ENCODE measurements at regions of chr6 and their contacts with region 1.

Region 1: GRCh38 chr6:41072676-41073623 is at the start of gene NFYA:
- DNase-seq: peak; percentile 100
- H3K4me3 Mint-ChIP-seq: peak within 1 kb of the TSS; percentile 95
- H3K27ac Mint-ChIP-seq: peak within 1 kb of the TSS; percentile 99
- H3K4me1 Mint-ChIP-seq: peaks cover 66% of the 10 kb centered on the region
- H3K27me3 Mint-ChIP-seq: peaks cover 5% of the 10 kb centered on the region
- total RNA-seq, gene NFYA: 29.6 and 30.1 TPM in 2 replicates

Region 2: DNA sequence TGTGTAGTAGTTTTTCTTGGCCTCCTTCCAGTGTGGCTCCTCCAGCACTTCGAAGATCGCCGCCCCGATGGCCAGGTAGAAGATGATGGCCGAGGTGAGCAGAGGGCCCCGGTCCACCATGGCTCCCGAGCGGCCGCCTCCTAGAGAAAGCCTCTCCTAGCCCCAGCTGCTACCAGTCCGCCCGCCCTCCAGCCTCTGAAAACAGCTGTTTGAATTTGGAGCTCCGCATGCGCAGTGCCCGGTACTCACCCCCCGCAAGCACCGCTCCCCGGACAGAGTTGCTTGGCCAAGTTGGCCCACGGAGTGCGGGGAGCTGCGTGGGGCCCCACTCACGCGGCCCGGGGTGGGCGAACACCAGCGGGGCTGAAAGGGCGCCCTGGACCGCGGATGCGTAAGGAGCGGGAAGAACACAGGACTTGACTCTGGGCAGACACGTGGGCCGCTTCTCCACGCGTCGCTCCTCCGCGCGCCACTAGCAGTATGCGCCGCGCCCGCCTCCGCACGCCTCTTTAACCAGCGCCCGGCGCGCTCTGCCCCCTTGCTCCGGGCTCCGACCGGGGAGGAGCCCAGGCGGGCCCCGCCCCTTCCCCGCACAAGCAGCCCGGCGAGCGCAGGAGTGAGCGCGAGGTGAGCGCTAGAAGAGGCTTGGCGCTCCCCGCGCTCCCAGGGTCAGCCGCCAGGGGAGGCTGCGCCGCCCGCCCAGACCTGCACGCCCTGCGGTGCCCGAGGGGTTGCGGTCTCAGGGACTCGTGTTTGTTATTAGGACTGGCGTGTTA is 1843.8 kb before region 1 on chr6 and contains the start of gene KCNK5:
- intact Hi-C with region 1: loop called (anchors 5 kb)
- DNase-seq: peak; percentile 86
- H3K4me3 Mint-ChIP-seq: peak within 1 kb of the TSS; percentile 88
- H3K27ac Mint-ChIP-seq: peak within 1 kb of the TSS; percentile 94
- H3K4me1 Mint-ChIP-seq: peaks cover 54% of the 10 kb centered on the region
- H3K27me3 Mint-ChIP-seq: no peaks in the 10 kb centered on the region
- total RNA-seq, gene KCNK5: 36.7 and 38.7 TPM in 2 replicates

Region 3: GRCh38 chr6:40845553-40845952 is 227.4 kb before region 1 on chr6:
- intact Hi-C with region 1: no loop called
- DNase-seq: peak; percentile 10
- H3K4me3 Mint-ChIP-seq: no peak overlapping the region
- H3K27ac Mint-ChIP-seq: no peak overlapping the region
- H3K4me1 Mint-ChIP-seq: no peaks in the 10 kb centered on the region
- H3K27me3 Mint-ChIP-seq: peaks cover 30% of the 10 kb centered on the region

Region 4: DNA sequence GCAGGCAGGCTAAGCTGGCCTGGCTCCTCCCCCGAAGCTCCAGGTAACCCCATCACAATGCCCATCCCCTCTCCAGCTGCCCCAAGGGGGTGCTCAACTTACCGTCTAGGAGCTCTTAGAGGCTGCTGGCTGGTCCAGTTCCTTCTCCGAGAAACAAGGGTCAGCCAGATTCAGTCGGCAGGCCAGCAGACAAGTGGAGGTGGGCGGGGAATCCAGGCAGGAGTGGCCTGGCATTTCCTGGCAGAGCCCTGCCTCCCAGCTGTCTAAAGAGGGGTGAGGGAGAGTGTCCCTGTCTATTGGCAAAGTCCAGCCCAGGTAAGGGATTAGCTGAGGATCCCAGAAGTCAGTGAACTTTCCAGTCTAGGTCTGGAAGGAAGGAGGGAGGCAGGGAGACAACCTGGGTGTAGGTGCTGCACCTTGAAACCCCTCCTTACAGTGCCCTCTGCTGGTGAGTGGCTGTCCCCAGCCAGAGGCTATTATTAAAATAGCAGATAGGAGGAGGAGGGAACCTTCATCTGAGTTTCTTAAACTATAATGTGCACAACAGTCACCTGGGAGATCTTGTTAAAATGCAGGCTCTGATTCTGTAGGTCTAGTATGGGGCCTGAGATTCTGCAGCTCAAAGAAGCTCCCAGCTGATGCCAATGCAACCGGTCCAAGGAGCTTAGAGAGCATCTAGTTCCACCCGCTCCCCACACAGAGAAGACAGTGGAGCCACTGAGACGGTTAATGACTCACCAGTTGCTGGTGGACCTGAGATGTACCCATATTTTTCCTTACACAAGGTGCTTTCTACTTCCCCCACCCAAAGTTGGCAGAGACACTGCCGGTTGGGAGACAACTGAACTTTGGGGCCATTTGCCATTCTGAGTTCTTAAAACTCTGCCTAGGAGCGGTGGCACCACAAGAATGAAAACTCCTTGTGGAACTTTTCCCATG is 33.6 kb before region 1 on chr6 and contains the start of gene UNC5CL:
- intact Hi-C with region 1: loop called (anchors 1 kb)
- DNase-seq: peak; percentile 45
- H3K4me3 Mint-ChIP-seq: no peak within 1 kb of the TSS
- H3K27ac Mint-ChIP-seq: peak within 1 kb of the TSS; percentile 3
- H3K4me1 Mint-ChIP-seq: peaks cover 19% of the 10 kb centered on the region
- H3K27me3 Mint-ChIP-seq: peaks cover 7% of the 10 kb centered on the region
- total RNA-seq, gene UNC5CL: 0.93 and 0.99 TPM in 2 replicates

Region 5: DNA sequence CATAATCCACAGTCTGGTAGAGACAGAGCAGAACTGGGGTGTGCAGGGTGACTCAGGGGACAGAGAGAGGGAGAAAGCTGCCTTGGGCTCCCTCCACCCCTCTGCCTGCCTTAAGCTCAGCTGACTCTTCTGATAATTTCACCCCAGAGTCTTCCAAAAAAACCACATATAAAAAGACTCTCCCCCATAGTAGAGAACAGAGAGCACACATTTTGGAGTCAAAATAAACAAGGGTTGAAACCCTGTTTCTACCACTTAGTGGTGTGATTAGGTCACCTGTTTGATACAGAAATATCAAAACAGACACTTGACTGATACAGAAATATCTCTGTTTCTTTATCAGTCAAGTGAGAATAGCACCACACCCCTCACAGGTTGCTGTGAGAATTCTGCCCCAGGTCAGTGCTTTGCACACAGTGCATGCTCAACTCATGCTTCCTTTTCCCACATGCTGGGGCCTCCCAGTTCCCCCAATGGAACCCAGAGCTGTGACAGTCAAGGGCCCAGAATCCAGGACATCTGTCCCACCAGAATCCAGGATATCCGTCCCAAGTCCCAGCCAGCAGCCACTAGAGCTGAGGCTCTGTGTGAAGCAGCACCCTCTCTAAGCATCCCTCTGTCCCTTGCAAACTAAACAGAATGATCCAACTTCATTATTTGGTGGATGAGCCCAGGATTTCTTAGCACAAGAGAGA is 126.7 kb after region 1 on chr6:
- intact Hi-C with region 1: loop called (anchors 5 kb)
- DNase-seq: no peak
- H3K4me3 Mint-ChIP-seq: peak overlapping the region; percentile 77
- H3K27ac Mint-ChIP-seq: peak overlapping the region; percentile 95
- H3K4me1 Mint-ChIP-seq: peaks cover 68% of the 10 kb centered on the region
- H3K27me3 Mint-ChIP-seq: no peaks in the 10 kb centered on the region

Region 6: GRCh38 chr6:41531591-41532582 is 458.9 kb after region 1 on chr6:
- intact Hi-C with region 1: loop called (anchors 1 kb)
- DNase-seq: peak; percentile 63
- H3K4me3 Mint-ChIP-seq: peak overlapping the region; percentile 76
- H3K27ac Mint-ChIP-seq: peak overlapping the region; percentile 92
- H3K4me1 Mint-ChIP-seq: peaks cover 50% of the 10 kb centered on the region
- H3K27me3 Mint-ChIP-seq: peaks cover 38% of the 10 kb centered on the region

Region 7: DNA sequence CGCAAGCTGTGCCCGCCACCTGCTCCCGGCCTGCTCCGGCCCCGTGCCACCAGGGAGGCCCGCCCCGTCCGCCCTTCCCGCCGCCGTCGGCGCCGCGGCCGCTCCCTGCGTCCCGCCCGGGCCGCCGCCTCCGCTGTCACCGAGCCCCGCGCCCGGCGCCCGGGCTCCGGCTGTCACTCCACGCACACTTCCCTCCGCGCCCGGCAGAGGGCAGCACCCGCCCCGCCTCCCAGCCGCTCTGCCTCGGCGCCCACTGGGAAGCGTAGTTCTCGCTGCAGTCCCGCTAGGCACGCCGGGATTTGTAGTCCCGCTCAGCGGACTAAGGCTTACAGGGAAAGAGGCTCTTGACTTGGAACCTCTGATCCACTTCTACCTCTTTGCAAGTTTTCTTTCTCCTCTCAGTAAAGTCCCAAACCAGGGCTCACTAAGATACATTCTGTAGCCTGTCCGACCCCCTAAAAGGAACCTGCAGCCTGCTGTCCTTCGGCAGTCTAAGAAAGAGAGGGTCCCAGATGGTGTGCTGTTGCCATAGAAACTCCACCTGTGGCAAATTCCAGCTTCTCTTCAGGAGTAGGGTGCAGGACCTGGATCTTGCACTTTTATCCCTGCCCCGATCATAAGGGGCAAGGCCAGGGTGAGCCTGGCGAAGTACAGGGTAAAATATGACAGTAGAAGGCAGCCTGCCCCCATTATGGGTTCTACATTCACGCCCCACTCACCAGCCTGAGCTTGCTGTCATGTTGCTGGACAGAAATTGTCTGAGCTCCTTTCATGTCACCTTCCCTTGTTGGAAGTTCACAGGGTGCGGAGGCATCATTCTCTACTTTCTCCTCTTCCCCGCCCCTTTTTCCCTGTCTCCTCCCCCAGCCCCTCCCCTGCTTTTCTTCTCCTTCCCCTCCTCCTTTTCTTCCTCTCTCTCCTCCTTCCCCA is 662.7 kb after region 1 on chr6 and contains the start of gene TFEB:
- intact Hi-C with region 1: loop called (anchors 10 kb)
- DNase-seq: peak; percentile 92
- H3K4me3 Mint-ChIP-seq: peak within 1 kb of the TSS; percentile 80
- H3K27ac Mint-ChIP-seq: peak within 1 kb of the TSS; percentile 31
- H3K4me1 Mint-ChIP-seq: peaks cover 23% of the 10 kb centered on the region
- H3K27me3 Mint-ChIP-seq: no peaks in the 10 kb centered on the region
- total RNA-seq, gene TFEB: 15.6 and 17.2 TPM in 2 replicates

Measured in activated T-helper 1 cell treated with anti-CD3 and anti-CD28 coated beads, Interleukin-12 subunit alpha, Interleukin-12 subunit beta, Interleukin-2, Interleukin-4 antibody, amounts not matched to agents 30 ng/mL and 10 ng/mL and 1 ng/mL, durations not matched to agents 14 hours and 24 hours and 36 hours (primary cell).